Prostate gland (tissue), 2 donors: ENCODE measurements at regions of chr3 and their contacts with region 1.

Region 1: GRCh38 chr3:132332508-132332907 is 15.3 kb downstream of the ACP3 start:
- DNase-seq: no peak
- H3K4me3 ChIP-seq: no peak overlapping the region
- H3K27ac ChIP-seq: peak overlapping the region; percentile 48 to 89
- H3K4me1 ChIP-seq: peaks cover 4% of the 10 kb centered on the region
- H3K27me3 ChIP-seq: no peaks in the 10 kb centered on the region
- CTCF ChIP-seq: no peak
- POLR2A ChIP-seq: no peak

Region 2: DNA sequence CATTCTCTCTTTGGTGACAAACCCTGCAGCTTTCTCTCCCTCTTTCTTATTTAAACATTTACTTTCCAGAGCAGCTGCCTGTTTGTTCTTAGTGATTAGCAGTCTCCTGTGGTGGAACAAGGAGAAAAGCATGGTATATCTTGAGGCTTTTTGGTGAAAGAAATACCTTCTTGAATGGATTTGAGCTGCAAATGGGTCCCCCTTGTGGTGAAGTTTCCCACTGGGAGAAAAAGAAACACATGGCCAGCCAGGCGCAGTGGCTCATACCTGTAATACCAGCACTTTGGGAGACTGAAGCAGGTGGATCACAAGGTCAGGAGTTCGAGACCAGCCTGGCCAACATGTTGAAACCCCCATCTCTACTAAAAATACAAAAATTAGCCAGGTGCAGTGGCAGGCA is 63.6 kb before region 1 on chr3:
- intact Hi-C with region 1: loop called (anchors 5 kb)
- DNase-seq: no peak
- H3K4me3 ChIP-seq: no peak overlapping the region
- H3K27ac ChIP-seq: peak overlapping the region; percentile 68 to 73
- H3K4me1 ChIP-seq: peaks cover 4% of the 10 kb centered on the region
- H3K27me3 ChIP-seq: no peaks in the 10 kb centered on the region
- CTCF ChIP-seq: peak in 2 of 4 experiments; percentile 29 to 39
- POLR2A ChIP-seq: no peak

Region 3: DNA sequence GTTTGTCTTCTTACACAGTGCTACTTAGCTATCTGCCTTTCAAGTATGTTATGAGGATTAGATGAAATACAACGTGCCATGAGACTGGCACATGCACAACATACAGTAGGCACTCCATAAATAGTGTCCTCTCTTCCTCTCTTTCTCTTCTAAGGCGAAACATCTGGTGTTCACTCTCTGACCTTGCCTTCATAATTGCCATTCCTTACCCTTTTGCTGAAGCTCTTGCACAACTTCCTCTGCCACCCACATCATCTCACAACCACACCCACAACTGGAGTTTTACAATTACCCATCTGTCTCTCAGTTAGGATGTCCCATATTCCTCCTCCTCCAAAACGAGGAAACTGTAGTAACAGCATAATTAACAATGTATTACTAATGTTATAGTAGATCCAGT is 41.7 kb before region 1 on chr3:
- intact Hi-C with region 1: no loop called
- DNase-seq: no peak
- H3K4me3 ChIP-seq: no peak overlapping the region
- H3K27ac ChIP-seq: no peak overlapping the region
- H3K4me1 ChIP-seq: no peaks in the 10 kb centered on the region
- H3K27me3 ChIP-seq: no peaks in the 10 kb centered on the region
- CTCF ChIP-seq: no peak
- POLR2A ChIP-seq: no peak